ENCODE measurements at regions of chr2 and their contacts with region 1.

Region 1: DNA sequence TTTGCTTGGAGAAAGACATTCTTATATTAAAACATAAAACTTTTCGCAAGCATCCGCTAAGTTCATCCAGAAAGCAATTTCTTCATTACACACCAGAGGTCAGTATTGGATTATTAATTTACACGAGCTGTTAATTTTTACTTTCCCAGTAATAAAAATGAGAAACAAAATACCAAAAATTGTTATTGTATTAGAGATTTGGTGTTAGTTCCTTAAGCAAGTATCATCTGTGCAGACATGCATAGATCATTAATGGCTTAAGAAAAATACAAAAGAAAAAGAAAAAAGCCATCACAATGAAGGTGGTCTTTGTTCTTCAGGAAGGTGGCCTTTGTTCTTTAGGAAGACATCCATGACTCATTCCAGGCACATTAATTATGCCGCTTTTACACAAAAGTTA is 53.6 kb upstream of the HNMT start:
- DNase-seq: peak; percentile 71
- ATAC-seq: no peak
- H3K4me3 ChIP-seq: no peak overlapping the region
- H3K27ac ChIP-seq: no peak overlapping the region
- H3K4me1 ChIP-seq: no peaks in the 10 kb centered on the region
- H3K27me3 ChIP-seq: no peaks in the 10 kb centered on the region
- CTCF ChIP-seq: peak; percentile 83

Region 2: DNA sequence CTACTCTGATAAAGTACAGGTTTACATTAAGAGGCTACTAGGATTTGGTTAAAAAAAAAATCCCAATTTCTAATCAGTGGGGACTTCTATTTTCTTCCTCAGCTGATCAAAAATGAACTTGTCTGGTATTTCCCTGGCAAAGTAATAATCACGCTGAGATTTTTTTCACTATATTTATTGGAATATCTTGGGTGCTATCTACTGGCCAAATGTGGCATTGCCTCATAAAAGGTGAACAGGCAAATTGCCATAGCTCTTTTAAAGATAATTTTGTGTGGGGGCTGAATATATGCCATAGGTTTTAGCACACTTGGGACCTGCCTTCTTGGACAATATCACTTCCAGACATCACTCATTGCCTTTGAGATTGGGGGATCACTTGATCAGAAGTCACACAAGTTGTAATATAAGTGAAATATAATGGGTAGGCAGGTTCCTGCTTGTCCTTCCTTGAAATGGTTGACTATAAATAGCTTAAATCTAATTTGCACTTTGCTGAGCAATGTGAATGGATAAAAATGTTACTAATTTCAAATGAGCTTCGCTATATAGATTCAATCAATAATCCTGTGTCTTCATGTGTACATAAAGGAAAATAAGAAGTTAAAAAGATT is 876.5 kb after region 1 on chr2:
- CTCF ChIA-PET with region 1: interaction called, 6 read pairs
- POLR2A ChIA-PET with region 1: interaction called, 3 read pairs
- intact Hi-C with region 1: loop called (anchors 1 kb)
- DNase-seq: peak; percentile 74
- ATAC-seq: no peak; the same call in 1 of the 2 replicates
- H3K4me3 ChIP-seq: no peak overlapping the region
- H3K27ac ChIP-seq: no peak overlapping the region
- H3K4me1 ChIP-seq: no peaks in the 10 kb centered on the region
- H3K27me3 ChIP-seq: peaks cover 12% of the 10 kb centered on the region
- CTCF ChIP-seq: peak; percentile 89

Measured in PC-3 (cell line).